Endothelial cell of umbilical vein (primary cell): ENCODE measurements at regions of chr12 and their contacts with region 1.

Region 1: GRCh38 chr12:108856428-108857157 is 790 bp downstream of the SSH1 start:
- DNase-seq: peak; percentile 49
- H3K4me3 ChIP-seq: peak overlapping the region; percentile 0 to 74 (median 60)
- H3K27ac ChIP-seq: peak overlapping the region; percentile 98
- H3K4me1 ChIP-seq: peaks cover 46% of the 10 kb centered on the region
- H3K27me3 ChIP-seq: no peaks in the 10 kb centered on the region
- CTCF ChIP-seq: no peak
- POLR2A ChIP-seq: peak; percentile 22

Region 2: GRCh38 chr12:108691175-108691997 is 165.2 kb before region 1 on chr12:
- CTCF ChIA-PET with region 1: no interaction called
- POLR2A ChIA-PET with region 1: no interaction called
- dilution Hi-C with region 1: no loop called
- intact Hi-C with region 1: loop called (anchors 1 kb)
- DNase-seq: peak; percentile 99
- H3K4me3 ChIP-seq: peak overlapping the region in 1 of 3 experiments; percentile 7
- H3K27ac ChIP-seq: peak overlapping the region; percentile 89
- H3K4me1 ChIP-seq: peaks cover 49% of the 10 kb centered on the region
- H3K27me3 ChIP-seq: no peaks in the 10 kb centered on the region
- CTCF ChIP-seq: peak in 1 of 2 donors; percentile 31
- POLR2A ChIP-seq: peak; percentile 56

Region 3: GRCh38 chr12:108826101-108826806 is 30.3 kb before region 1 on chr12:
- CTCF ChIA-PET with region 1: interaction called, 62 read pairs
- POLR2A ChIA-PET with region 1: interaction called, 41 read pairs
- dilution Hi-C with region 1: no loop called
- intact Hi-C with region 1: loop called (anchors 1 kb)
- DNase-seq: peak; percentile 98
- H3K4me3 ChIP-seq: peak overlapping the region in 1 of 3 experiments; percentile 49
- H3K27ac ChIP-seq: peak overlapping the region; percentile 100
- H3K4me1 ChIP-seq: peaks cover 71% of the 10 kb centered on the region
- H3K27me3 ChIP-seq: no peaks in the 10 kb centered on the region
- CTCF ChIP-seq: peak in 1 of 2 donors; percentile 23
- POLR2A ChIP-seq: peak; percentile 31

Region 4: DNA sequence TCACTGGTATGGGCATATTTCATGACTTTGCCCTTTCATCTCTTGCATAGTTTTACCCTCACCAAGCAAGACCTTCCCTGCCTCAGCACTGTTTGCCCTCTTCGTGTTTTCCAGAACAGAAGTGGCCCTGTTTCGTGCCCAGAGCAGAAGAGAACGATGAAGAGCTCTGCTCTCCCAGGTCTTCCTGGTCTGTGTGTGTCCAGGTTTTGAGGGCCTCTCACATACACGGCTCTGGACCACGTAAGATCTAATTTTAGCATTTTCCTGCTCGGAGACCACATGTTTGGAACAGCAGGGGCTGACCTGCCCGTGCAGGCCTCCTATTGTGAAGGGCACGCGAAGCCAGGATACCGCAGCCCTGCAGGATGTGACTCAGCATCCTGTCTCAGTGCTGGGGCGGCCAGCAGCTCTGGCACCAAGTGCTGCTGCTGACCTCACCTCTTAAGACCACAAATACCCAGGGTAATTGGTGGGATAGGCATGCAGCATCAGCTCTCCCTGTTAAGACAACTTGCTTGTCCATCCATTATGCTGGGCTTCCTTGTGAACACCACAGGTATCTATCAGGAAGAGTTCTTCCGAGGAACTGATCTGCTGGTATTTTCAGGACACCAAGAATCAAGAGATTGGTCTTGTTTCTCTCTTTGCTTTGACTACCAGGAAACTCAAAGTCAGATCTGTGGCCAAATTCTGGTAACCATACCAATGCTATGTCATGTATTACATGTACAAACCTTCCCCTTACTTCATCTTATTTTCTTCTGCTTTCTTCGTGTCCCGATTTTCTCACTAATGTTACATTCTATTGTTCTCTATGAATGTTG is 18.2 kb before region 1 on chr12:
- CTCF ChIA-PET with region 1: interaction called, 31 read pairs
- POLR2A ChIA-PET with region 1: interaction called, 16 read pairs
- dilution Hi-C with region 1: no loop called
- intact Hi-C with region 1: loop called (anchors 1 kb)
- DNase-seq: peak; percentile 100
- H3K4me3 ChIP-seq: peak overlapping the region in 1 of 3 experiments; percentile 16
- H3K27ac ChIP-seq: peak overlapping the region; percentile 98
- H3K4me1 ChIP-seq: peaks cover 70% of the 10 kb centered on the region
- H3K27me3 ChIP-seq: no peaks in the 10 kb centered on the region
- CTCF ChIP-seq: no peak
- POLR2A ChIP-seq: peak; percentile 79

Region 5: GRCh38 chr12:109093022-109093918 is 236.7 kb after region 1 on chr12 and contains the start of gene ALKBH2:
- CTCF ChIA-PET with region 1: interaction called, 3 read pairs
- POLR2A ChIA-PET with region 1: no interaction called
- dilution Hi-C with region 1: no loop called
- intact Hi-C with region 1: loop called (anchors 1 kb)
- DNase-seq: peak; percentile 89
- H3K4me3 ChIP-seq: peak within 1 kb of the TSS in 2 of 3 experiments; percentile 33 to 41
- H3K27ac ChIP-seq: peak within 1 kb of the TSS; percentile 43
- H3K4me1 ChIP-seq: peaks cover 7% of the 10 kb centered on the region
- H3K27me3 ChIP-seq: no peaks in the 10 kb centered on the region
- CTCF ChIP-seq: peak; percentile 99 to 100
- POLR2A ChIP-seq: peak; percentile 67
- total RNA-seq, gene ALKBH2: 5.4 TPM in 2 replicates